ENCODE measurements at regions of chr2 and their contacts with region 1.

Region 1: DNA sequence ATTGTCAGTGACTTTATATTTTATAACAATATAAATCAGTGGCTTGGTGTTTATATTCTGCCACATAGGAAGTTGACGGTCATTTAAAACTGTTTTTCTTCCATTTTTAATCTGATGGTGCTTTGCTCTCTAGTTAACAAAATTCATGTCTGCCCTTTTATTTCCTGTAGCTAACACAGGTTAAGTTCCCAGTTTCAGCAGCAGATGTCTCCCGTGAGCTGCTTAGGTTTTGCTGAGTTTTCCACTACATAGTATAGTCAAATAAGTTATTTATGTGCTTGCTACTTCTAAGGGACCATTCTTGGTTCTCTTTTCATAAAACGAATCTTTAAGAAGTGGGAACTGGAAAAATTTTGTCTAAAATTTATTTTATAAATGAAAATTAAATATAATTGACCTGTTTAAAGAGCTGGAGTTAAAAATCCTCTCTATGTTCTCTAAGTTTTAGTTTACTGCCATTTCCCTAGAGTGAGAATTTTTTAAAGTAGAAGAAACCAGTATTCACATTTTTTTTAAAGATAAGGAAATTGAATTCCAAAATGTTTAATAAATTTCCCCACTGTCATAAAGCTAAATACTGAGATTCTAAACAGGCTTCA is 20.6 kb downstream of the HTR2B start:
- DNase-seq: peak; percentile 76
- H3K4me3 ChIP-seq: no peak overlapping the region
- H3K27ac ChIP-seq: no peak overlapping the region
- H3K4me1 ChIP-seq: peaks cover 12% of the 10 kb centered on the region; the same call in 1 of the 2 replicates
- H3K27me3 ChIP-seq: no peaks in the 10 kb centered on the region

Region 2: DNA sequence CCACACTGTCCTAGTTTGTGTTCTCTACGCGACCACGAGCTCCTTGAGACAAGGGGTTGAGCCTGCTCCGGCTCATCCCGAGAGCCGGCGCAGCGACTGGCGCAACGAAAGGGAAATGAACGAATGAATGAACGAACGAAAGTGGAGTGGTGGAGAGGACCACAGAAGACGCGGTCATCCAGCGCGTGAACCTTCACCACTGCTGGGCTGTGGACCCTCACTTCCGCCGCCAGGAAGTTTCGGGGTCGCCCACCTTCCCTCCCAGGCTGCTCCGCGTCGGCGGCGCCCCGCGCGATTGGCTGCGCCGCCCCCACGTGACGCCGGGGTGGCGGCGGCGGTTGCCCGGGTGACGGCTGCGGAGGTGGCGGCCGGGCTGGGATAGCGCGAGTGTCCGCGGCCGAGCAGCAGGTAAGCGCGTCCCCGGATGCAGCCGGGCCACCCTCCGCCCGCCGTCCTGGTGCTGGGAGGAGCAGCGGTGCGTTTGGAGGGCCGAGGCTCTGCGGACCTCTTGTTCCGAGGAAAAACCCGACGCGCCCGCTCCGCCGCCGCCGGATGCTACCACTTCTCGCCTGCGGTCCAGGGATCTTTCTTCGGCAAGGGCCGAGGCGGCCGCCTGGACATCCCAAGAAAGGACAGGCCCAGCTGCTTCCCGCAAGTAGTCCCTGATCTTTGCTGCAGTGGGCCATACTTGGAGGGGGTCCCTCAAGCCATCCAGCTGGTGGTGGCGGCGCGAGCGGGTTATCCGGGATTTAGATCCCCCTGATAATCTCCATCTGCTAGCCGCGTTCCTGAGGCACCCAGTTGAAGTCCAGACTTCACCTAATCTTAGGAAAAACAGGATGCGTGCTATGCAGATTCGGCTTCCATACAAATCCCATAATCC is 94.3 kb after region 1 on chr2 and contains the start of gene ARMC9:
- in situ Hi-C with region 1: loop called (anchors 10 kb)
- DNase-seq: peak; percentile 88
- H3K4me3 ChIP-seq: peak within 1 kb of the TSS; percentile 90
- H3K27ac ChIP-seq: peak within 1 kb of the TSS; percentile 75
- H3K4me1 ChIP-seq: peaks cover 25% of the 10 kb centered on the region
- H3K27me3 ChIP-seq: no peaks in the 10 kb centered on the region
- total RNA-seq, gene ARMC9: 15.1 and 17.7 TPM in 2 replicates

Region 3: DNA sequence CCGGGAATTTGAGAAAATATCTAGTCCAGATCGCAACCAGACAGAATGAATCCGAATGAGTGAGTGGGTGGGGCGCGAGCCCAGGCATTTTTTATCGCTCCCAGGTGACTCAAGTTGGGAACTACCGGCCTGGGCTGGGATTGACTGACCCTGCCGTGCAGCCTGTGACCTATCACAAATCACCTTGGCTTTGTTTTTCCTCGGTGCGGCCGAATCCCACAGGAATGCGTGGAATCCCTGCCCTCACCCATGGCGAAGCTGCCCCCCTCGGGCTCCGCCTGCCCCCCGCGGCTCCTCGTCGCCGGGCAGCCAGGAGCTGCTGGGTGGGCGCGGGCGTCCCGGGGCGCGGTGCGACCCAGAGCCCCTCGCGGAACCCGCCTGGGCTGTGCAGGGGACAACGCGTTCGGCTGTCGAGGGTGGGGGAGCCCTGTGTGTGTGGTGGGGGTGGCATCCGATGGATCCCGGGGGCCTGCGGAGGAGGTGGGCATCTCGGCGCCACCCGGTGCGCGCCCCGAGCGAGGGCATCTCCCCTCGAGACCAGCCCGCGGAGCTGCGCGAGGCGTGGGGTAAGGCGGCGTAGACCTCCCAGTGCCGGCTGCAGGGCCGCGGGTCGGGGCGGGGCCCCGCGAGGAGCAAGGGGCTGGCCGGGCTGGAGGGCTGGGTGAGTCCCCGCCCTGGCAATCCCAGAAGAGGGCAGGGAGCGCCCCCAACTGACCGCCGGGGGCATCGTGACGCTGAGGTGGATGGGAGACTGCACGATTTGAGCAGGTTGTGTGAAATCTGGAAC is 307.8 kb after region 1 on chr2:
- in situ Hi-C with region 1: loop called (anchors 25 kb)
- DNase-seq: peak; percentile 89
- H3K4me3 ChIP-seq: peak overlapping the region; percentile 73
- H3K27ac ChIP-seq: no peak overlapping the region
- H3K4me1 ChIP-seq: no peaks in the 10 kb centered on the region
- H3K27me3 ChIP-seq: 0 out of 2 replicates have a peak, but pooled peaks cover 4% of the 10 kb centered on the region

Measured in GM23248 (cell line).